ENCODE measurements at regions of chr10 and their contacts with region 1.

Region 1: DNA sequence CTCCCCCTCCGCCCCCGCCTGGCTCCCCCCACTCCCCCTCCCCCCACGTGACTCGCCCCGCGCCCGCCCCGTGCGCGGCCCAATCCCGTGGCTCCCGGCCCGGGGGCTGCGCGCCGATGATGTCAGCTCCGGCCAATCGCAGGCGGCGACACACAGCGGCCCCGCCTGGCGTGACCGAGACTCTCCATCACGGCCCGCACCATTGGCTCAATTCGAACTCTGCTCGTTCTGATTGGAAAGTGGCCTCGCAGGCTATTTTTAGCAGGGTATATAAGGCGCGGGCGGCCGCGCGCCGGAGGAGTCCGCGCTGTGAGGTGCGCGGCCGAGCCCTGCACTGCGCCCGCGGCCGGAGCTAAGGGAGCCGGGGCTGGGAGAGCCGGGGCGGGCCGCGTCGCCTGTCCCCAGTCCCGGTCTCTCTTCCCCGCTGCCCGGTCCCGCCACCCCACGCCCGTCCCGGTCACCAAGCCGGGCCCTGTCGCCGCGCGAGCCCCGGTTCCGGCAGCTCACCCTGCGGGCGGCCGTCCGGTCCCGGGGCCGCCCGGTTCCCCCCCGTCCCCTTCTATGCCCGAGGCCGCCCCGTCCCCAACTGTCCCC is 345 bp upstream of the KLF6 start:
- DNase-seq: peak; percentile 85 to 98
- H3K4me3 ChIP-seq: peak overlapping the region; percentile 85
- H3K27ac ChIP-seq: peak overlapping the region; percentile 92
- H3K4me1 ChIP-seq: peaks cover 26% of the 10 kb centered on the region
- H3K27me3 ChIP-seq: no peaks in the 10 kb centered on the region
- CTCF ChIP-seq: no peak

Region 2: GRCh38 chr10:3452173-3452626 is 333.2 kb before region 1 on chr10:
- CTCF ChIA-PET with region 1: no interaction called
- POLR2A ChIA-PET with region 1: no interaction called
- intact Hi-C with region 1: loop called (anchors 5 kb)
- DNase-seq: no peak
- H3K4me3 ChIP-seq: no peak overlapping the region
- H3K27ac ChIP-seq: no peak overlapping the region
- H3K4me1 ChIP-seq: no peaks in the 10 kb centered on the region
- H3K27me3 ChIP-seq: no peaks in the 10 kb centered on the region
- CTCF ChIP-seq: no peak

Region 3: GRCh38 chr10:3636356-3637181 is 148.8 kb before region 1 on chr10:
- CTCF ChIA-PET with region 1: no interaction called
- POLR2A ChIA-PET with region 1: no interaction called
- intact Hi-C with region 1: loop called (anchors 2 kb)
- DNase-seq: peak; percentile 79 to 86
- H3K4me3 ChIP-seq: peak overlapping the region; percentile 50; the same call in 1 of the 2 replicates
- H3K27ac ChIP-seq: peak overlapping the region; percentile 94
- H3K4me1 ChIP-seq: peaks cover 58% of the 10 kb centered on the region
- H3K27me3 ChIP-seq: no peaks in the 10 kb centered on the region
- CTCF ChIP-seq: no peak

Region 4: GRCh38 chr10:3805791-3806461 is 20.6 kb after region 1 on chr10:
- CTCF ChIA-PET with region 1: no interaction called
- POLR2A ChIA-PET with region 1: interaction called, 27 read pairs
- intact Hi-C with region 1: loop called (anchors 1 kb)
- DNase-seq: peak; percentile 79 to 83
- H3K4me3 ChIP-seq: peak overlapping the region; percentile 25; the same call in 1 of the 2 replicates
- H3K27ac ChIP-seq: peak overlapping the region; percentile 96
- H3K4me1 ChIP-seq: peaks cover 66% of the 10 kb centered on the region
- H3K27me3 ChIP-seq: no peaks in the 10 kb centered on the region
- CTCF ChIP-seq: no peak

Region 5: GRCh38 chr10:3948843-3949242 is 163.5 kb after region 1 on chr10:
- CTCF ChIA-PET with region 1: no interaction called
- POLR2A ChIA-PET with region 1: no interaction called
- intact Hi-C with region 1: loop called (anchors 10 kb)
- DNase-seq: no peak
- H3K4me3 ChIP-seq: no peak overlapping the region
- H3K27ac ChIP-seq: no peak overlapping the region
- H3K4me1 ChIP-seq: peaks cover 23% of the 10 kb centered on the region
- H3K27me3 ChIP-seq: no peaks in the 10 kb centered on the region
- CTCF ChIP-seq: no peak

Region 6: GRCh38 chr10:4663162-4663904 is 878.0 kb after region 1 on chr10:
- CTCF ChIA-PET with region 1: no interaction called
- POLR2A ChIA-PET with region 1: no interaction called
- intact Hi-C with region 1: loop called (anchors 2 kb)
- DNase-seq: peak; percentile 75 to 94
- H3K4me3 ChIP-seq: peak overlapping the region; percentile 17; the same call in 1 of the 2 replicates
- H3K27ac ChIP-seq: peak overlapping the region; percentile 96
- H3K4me1 ChIP-seq: peaks cover 24% of the 10 kb centered on the region
- H3K27me3 ChIP-seq: no peaks in the 10 kb centered on the region
- CTCF ChIP-seq: no peak

Measured in PC-9 (cell line).